Activated CD4-positive, alpha-beta memory T cell treated with anti-CD3 and anti-CD28 coated beads for 36 hours (primary cell): ENCODE measurements at regions of chr15 and their contacts with region 1.

Region 1: GRCh38 chr15:85840065-85840801 is 45.5 kb upstream of the KLHL25 start:
- DNase-seq: peak; percentile 88
- H3K4me3 Mint-ChIP-seq: peak overlapping the region; percentile 54
- H3K27ac Mint-ChIP-seq: no peak overlapping the region
- H3K4me1 Mint-ChIP-seq: peaks cover 3% of the 10 kb centered on the region
- H3K27me3 Mint-ChIP-seq: peaks cover 5% of the 10 kb centered on the region

Region 2: DNA sequence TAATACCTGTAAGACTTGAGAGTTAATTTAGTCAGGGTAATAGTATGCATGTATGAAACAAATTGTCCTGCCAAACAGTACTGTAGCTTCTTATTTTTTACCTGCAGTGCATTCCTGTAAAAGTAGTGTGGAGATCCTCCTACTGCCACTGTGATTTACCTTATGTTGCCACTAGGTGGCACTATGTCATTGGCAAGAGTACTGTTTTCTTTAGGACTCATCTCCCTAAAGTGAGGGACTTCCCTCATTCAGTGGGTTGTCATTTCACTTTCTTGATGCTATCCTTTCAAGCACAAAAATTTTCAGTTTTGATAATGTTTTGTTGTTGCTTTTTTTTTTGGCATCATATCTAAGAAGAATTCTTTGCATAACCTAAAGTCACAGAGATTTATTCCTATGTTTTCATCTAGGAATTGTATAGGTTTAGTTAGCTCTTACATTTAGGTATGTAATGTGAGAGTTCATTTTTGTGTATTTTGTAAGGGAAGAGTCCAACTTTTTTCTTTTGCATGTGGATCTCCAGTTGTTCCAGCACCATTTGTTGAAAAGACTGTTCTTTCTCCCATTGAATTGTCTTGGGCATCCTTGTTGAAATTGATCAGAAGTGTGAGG is 354.2 kb before region 1 on chr15:
- CTCF ChIA-PET with region 1: interaction called, 7 read pairs
- POLR2A ChIA-PET with region 1: no interaction called
- intact Hi-C with region 1: loop called (anchors 1 kb)
- DNase-seq: peak; percentile 41
- H3K4me3 Mint-ChIP-seq: no peak overlapping the region
- H3K27ac Mint-ChIP-seq: peak overlapping the region; percentile 32
- H3K4me1 Mint-ChIP-seq: peaks cover 69% of the 10 kb centered on the region
- H3K27me3 Mint-ChIP-seq: no peaks in the 10 kb centered on the region

Region 3: DNA sequence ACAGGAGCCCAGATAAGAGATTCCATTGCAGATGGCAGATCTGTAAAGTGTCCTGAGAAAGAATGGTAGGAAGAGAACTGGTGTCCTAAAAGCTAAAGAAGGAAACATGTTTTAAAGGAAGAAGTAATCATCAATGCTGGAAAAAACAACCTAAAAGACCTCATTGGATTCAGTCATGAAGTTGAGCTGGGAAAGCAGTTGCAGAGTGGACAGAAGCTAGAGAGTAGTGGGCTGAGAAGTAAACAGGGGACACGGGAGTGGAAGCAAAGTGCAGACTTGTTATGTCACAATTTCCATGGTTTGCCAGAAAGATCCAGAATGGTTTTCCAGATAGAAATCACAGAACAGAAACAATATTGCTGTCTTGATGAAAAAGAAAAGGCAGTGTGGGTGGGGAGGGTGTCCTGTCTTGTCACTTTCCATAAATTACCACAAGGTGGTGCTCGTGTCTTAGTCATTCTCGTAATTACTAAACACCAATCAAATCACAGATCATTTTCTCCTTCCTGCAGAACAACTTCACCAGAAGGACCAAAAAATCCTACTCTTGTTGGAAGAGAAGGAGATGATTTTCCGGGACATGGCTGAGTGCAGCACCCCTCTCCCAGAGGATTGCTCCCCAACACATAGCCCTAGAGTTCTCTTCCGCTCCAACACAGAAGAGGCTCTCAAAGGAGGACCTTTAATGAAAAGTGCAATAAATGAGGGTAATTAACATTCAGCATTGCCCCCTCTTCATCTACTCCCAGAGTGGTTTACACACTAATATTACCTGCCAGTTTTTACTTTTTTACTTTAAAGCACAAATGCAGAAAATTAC is 110.0 kb before region 1 on chr15:
- CTCF ChIA-PET with region 1: interaction called, 92 read pairs
- POLR2A ChIA-PET with region 1: no interaction called
- intact Hi-C with region 1: loop called (anchors 1 kb)
- DNase-seq: peak; percentile 51
- H3K4me3 Mint-ChIP-seq: no peak overlapping the region
- H3K27ac Mint-ChIP-seq: peak overlapping the region; percentile 71
- H3K4me1 Mint-ChIP-seq: peaks cover 28% of the 10 kb centered on the region
- H3K27me3 Mint-ChIP-seq: no peaks in the 10 kb centered on the region

Region 4: DNA sequence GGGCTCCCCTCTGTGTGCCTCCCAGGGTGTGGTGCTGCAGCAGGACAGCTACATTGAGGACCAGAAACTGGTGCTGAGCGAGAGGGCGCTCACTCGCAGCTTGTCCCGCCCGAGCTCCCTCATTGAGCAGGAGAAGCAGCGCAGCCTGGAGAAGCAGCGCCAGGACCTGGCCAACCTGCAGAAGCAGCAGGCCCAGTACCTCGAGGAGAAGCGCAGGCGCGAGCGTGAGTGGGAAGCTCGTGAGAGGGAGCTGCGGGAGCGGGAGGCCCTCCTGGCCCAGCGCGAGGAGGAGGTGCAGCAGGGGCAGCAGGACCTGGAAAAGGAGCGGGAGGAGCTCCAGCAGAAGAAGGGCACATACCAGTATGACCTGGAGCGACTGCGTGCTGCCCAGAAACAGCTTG is 99.2 kb before region 1 on chr15:
- CTCF ChIA-PET with region 1: interaction called, 13 read pairs
- POLR2A ChIA-PET with region 1: no interaction called
- intact Hi-C with region 1: no loop called
- DNase-seq: no peak
- H3K4me3 Mint-ChIP-seq: no peak overlapping the region
- H3K27ac Mint-ChIP-seq: no peak overlapping the region
- H3K4me1 Mint-ChIP-seq: no peaks in the 10 kb centered on the region
- H3K27me3 Mint-ChIP-seq: no peaks in the 10 kb centered on the region

Region 5: GRCh38 chr15:85794603-85795336 is 45.5 kb before region 1 on chr15 and contains the start of gene KLHL25:
- CTCF ChIA-PET with region 1: interaction called, 5 read pairs
- POLR2A ChIA-PET with region 1: no interaction called
- intact Hi-C with region 1: loop called (anchors 2 kb)
- DNase-seq: peak; percentile 95
- H3K4me3 Mint-ChIP-seq: peak within 1 kb of the TSS; percentile 90
- H3K27ac Mint-ChIP-seq: peak within 1 kb of the TSS; percentile 74
- H3K4me1 Mint-ChIP-seq: peaks cover 32% of the 10 kb centered on the region
- H3K27me3 Mint-ChIP-seq: no peaks in the 10 kb centered on the region
- total RNA-seq, gene KLHL25: 5.3 to 5.7 TPM